CD8-positive, alpha-beta T cell (primary cell): ENCODE measurements at regions of chr7 and their contacts with region 1.

Region 1: DNA sequence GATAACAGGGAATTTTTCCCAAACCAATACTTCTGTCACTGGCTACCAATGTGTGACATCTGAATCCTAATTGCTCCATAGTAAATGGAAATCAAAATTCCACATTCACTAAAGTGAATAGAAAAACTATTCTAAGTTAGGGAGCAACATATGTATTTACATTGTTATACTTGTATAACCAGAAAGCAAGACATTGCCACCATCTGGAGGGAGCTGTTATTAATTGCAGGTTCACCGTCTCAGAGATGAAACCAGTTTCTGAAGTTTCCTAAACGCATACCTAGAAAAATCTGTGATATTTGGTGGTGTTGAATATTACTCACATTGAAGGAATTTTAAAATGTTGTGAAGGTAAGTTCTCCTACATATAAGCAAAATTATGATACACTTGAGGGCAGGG is 390.1 kb downstream of the NXPH1 start:
- DNase-seq: no peak
- ATAC-seq: no peak
- H3K4me3 ChIP-seq: no peak overlapping the region
- H3K4me3 Mint-ChIP-seq: no peak overlapping the region
- H3K27ac ChIP-seq: no peak overlapping the region
- H3K27ac Mint-ChIP-seq: no peak overlapping the region
- H3K4me1 ChIP-seq: no peaks in the 10 kb centered on the region
- H3K4me1 Mint-ChIP-seq: no peaks in the 10 kb centered on the region
- H3K27me3 ChIP-seq: no peaks in the 10 kb centered on the region
- H3K27me3 Mint-ChIP-seq: no peaks in the 10 kb centered on the region
- CTCF ChIP-seq: no peak

Region 2: GRCh38 chr7:8560501-8560900 is 263.0 kb before region 1 on chr7:
- CTCF ChIA-PET with region 1: no interaction called
- POLR2A ChIA-PET with region 1: no interaction called
- intact Hi-C with region 1: no loop called
- DNase-seq: no peak
- ATAC-seq: no peak
- H3K4me3 ChIP-seq: no peak overlapping the region
- H3K4me3 Mint-ChIP-seq: no peak overlapping the region
- H3K27ac ChIP-seq: no peak overlapping the region
- H3K27ac Mint-ChIP-seq: no peak overlapping the region
- H3K4me1 ChIP-seq: no peaks in the 10 kb centered on the region
- H3K4me1 Mint-ChIP-seq: no peaks in the 10 kb centered on the region
- H3K27me3 ChIP-seq: no peaks in the 10 kb centered on the region
- H3K27me3 Mint-ChIP-seq: no peaks in the 10 kb centered on the region
- CTCF ChIP-seq: no peak

Region 3: GRCh38 chr7:8837970-8838369 is 14.5 kb after region 1 on chr7:
- CTCF ChIA-PET with region 1: no interaction called
- POLR2A ChIA-PET with region 1: no interaction called
- intact Hi-C with region 1: no loop called
- DNase-seq: no peak
- ATAC-seq: no peak
- H3K4me3 ChIP-seq: no peak overlapping the region
- H3K4me3 Mint-ChIP-seq: no peak overlapping the region
- H3K27ac ChIP-seq: no peak overlapping the region
- H3K27ac Mint-ChIP-seq: no peak overlapping the region
- H3K4me1 ChIP-seq: no peaks in the 10 kb centered on the region
- H3K4me1 Mint-ChIP-seq: no peaks in the 10 kb centered on the region
- H3K27me3 ChIP-seq: no peaks in the 10 kb centered on the region
- H3K27me3 Mint-ChIP-seq: no peaks in the 10 kb centered on the region
- CTCF ChIP-seq: no peak

Region 4: GRCh38 chr7:8871716-8872115 is 48.2 kb after region 1 on chr7:
- CTCF ChIA-PET with region 1: no interaction called
- POLR2A ChIA-PET with region 1: no interaction called
- intact Hi-C with region 1: loop called in 1 of 2 experiments (anchors 1 kb)
- DNase-seq: no peak
- ATAC-seq: no peak
- H3K4me3 ChIP-seq: no peak overlapping the region
- H3K4me3 Mint-ChIP-seq: no peak overlapping the region
- H3K27ac ChIP-seq: no peak overlapping the region
- H3K27ac Mint-ChIP-seq: no peak overlapping the region
- H3K4me1 ChIP-seq: no peaks in the 10 kb centered on the region
- H3K4me1 Mint-ChIP-seq: no peaks in the 10 kb centered on the region
- H3K27me3 ChIP-seq: no peaks in the 10 kb centered on the region
- H3K27me3 Mint-ChIP-seq: no peaks in the 10 kb centered on the region
- CTCF ChIP-seq: no peak